GM12878 (cell line): ENCODE measurements at regions of chr1 and their contacts with region 1.

Region 1: DNA sequence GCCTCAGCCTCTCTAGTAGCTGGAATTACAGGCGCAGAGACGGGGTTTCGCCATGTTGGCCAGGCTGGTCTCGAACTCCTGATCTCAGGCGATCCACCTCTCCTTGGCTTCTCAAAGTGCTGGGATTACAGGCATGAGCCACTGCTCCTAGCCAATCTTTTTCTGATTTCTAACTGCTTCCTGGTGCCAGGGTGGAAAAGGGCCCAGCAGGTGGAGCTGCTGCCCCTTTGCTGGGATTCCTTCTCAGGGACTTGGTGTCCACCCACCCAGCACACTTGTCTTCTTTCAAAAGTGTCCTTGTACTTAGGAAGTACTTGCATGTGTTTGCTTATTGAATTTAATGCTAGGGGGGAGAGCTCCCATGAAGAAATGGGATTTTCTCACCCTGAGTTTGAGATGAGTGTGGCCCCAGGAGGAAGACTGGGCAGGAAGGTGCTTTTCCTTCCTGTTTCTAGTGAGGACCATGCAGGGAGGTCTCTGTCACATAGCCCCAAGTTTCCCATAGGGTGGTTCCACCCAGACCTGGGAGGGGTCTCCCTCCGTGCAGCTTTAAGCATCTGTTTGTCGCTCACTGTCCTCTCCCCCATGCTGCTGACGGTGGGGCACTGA is 14.2 kb downstream of the UTP11 start:
- DNase-seq: no peak
- ATAC-seq: peak; percentile 14
- H3K4me3 ChIP-seq: no peak overlapping the region
- H3K27ac ChIP-seq: peak overlapping the region; percentile 43
- H3K4me1 ChIP-seq: peaks cover 52% of the 10 kb centered on the region
- H3K27me3 ChIP-seq: no peaks in the 10 kb centered on the region
- CTCF ChIP-seq: peak; percentile 65 to 83 (median 72)
- EP300 ChIP-seq: no peak
- POLR2A ChIP-seq: no peak
- RAD21 ChIP-seq: peak; percentile 86

Region 2: DNA sequence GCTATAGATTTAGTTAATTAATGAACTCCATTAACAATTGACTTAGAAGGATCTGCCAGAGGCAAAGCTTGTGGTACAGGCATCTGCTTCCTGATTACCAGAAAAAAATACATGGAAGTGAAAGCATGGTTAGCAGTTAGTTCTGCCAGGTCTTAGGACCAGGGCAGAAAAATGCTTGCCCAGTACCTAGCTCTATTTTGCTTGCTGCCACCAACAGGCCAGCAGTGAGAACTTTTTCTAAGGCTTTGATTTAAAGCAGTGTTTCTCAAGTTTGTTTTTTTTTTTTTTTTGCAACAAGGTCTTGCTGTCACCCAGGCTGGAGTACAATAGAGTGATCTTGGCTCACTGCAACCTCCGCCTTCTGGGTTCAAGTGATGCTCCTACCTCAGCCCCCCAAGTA is 150.9 kb before region 1 on chr1:
- CTCF ChIA-PET with region 1: no interaction called
- POLR2A ChIA-PET with region 1: no interaction called
- RAD21 ChIA-PET with region 1: no interaction called
- SMC1A ChIA-PET with region 1: no interaction called
- in situ Hi-C with region 1: no loop called
- intact Hi-C with region 1: no loop called
- DNase-seq: no peak
- ATAC-seq: peak; percentile 24; the same call in 1 of the 3 replicates
- H3K4me3 ChIP-seq: no peak overlapping the region
- H3K27ac ChIP-seq: no peak overlapping the region
- H3K4me1 ChIP-seq: no peaks in the 10 kb centered on the region
- H3K27me3 ChIP-seq: no peaks in the 10 kb centered on the region
- CTCF ChIP-seq: no peak; a peak in 1 of 6 replicates
- EP300 ChIP-seq: no peak
- POLR2A ChIP-seq: no peak
- RAD21 ChIP-seq: no peak

Region 3: DNA sequence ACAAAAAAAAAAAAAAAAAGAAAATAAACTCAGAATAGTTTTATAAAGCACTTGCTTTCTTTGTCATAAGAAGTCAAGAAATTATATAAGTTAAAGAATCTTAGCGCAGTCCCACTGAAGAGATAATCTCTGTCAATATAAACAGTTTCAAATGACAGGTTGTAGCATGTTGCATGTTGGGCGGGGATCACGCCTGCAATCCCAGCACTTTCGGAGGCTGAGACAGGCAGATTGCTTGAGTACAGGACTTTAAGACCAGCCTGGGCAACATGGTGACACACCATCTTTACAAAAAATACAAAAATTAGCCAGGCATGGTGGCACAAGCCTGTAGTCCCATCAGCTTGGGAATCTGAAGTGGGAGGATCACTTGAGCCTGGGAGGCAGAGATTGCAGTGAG is 61.4 kb before region 1 on chr1:
- CTCF ChIA-PET with region 1: no interaction called
- POLR2A ChIA-PET with region 1: no interaction called
- RAD21 ChIA-PET with region 1: no interaction called
- SMC1A ChIA-PET with region 1: no interaction called
- in situ Hi-C with region 1: no loop called
- intact Hi-C with region 1: no loop called
- DNase-seq: no peak
- ATAC-seq: no peak
- H3K4me3 ChIP-seq: no peak overlapping the region
- H3K27ac ChIP-seq: no peak overlapping the region
- H3K4me1 ChIP-seq: no peaks in the 10 kb centered on the region
- H3K27me3 ChIP-seq: no peaks in the 10 kb centered on the region
- CTCF ChIP-seq: no peak
- EP300 ChIP-seq: no peak
- POLR2A ChIP-seq: no peak
- RAD21 ChIP-seq: no peak

Region 4: GRCh38 chr1:38012363-38013226 is 14.1 kb before region 1 on chr1 and contains the start of gene UTP11:
- CTCF ChIA-PET with region 1: interaction called, 23 read pairs
- POLR2A ChIA-PET with region 1: interaction called, 3 read pairs
- RAD21 ChIA-PET with region 1: interaction called, 5 read pairs
- SMC1A ChIA-PET with region 1: interaction called, 3 read pairs
- in situ Hi-C with region 1: no loop called
- intact Hi-C with region 1: no loop called
- DNase-seq: peak; percentile 86
- ATAC-seq: peak; percentile 96
- H3K4me3 ChIP-seq: peak within 1 kb of the TSS; percentile 84
- H3K27ac ChIP-seq: peak within 1 kb of the TSS; percentile 84
- H3K4me1 ChIP-seq: peaks cover 8% of the 10 kb centered on the region; the same call in 1 of the 2 replicates
- H3K27me3 ChIP-seq: no peaks in the 10 kb centered on the region
- CTCF ChIP-seq: no peak
- EP300 ChIP-seq: no peak
- POLR2A ChIP-seq: peak; percentile 87
- RAD21 ChIP-seq: no peak
- polyA plus RNA-seq, gene UTP11: 96.4 to 107 TPM

Region 5: DNA sequence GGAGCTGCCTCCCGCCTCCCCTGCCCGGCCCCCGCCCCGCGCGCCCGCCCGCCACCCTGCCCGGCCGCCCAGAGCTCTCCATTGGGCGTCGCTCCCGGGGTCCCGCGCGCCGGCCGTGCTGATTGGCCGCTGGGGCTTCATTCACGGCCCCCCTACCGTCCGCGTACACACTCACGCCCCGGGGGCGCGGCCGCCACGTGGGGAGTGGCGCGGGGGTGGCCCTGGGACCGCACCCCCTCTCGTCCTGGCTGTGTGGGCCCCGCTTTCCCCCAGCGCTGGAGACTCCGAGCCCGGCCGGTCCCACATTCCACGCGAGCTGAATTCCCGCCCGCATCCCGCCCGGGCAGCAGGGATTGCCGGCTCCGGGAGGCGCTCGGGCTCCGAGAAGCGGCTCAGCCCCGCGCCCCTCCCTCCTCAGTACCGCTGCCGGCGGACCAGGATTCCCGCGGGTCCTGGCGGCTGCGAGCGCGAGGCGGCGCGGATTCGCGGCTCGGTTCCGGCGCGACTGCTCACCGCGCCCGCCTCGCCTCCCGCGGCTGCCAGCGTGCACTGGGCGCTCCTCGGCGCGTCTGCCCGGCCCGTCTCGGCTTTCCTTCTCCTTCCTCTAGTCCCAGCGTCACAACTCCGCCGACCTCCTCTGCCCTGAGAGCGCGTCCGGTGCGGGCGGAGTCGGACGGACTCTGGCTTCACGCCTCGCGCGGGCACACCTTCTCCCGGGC is 20.3 kb after region 1 on chr1:
- CTCF ChIA-PET with region 1: interaction called, 52 read pairs
- POLR2A ChIA-PET with region 1: interaction called, 32 read pairs
- RAD21 ChIA-PET with region 1: interaction called, 61 read pairs
- SMC1A ChIA-PET with region 1: interaction called, 68 read pairs
- in situ Hi-C with region 1: no loop called
- intact Hi-C with region 1: no loop called
- DNase-seq: no peak
- ATAC-seq: peak; percentile 87
- H3K4me3 ChIP-seq: peak overlapping the region; percentile 57; the same call in 1 of the 2 replicates
- H3K27ac ChIP-seq: no peak overlapping the region
- H3K4me1 ChIP-seq: peaks cover 15% of the 10 kb centered on the region
- H3K27me3 ChIP-seq: peaks cover 9 to 13% of the 10 kb centered on the region in 2 experiments
- CTCF ChIP-seq: no peak
- EP300 ChIP-seq: no peak
- POLR2A ChIP-seq: no peak
- RAD21 ChIP-seq: no peak

Region 6: GRCh38 chr1:38064232-38064903 is 37.7 kb after region 1 on chr1:
- CTCF ChIA-PET with region 1: interaction called, 252 read pairs
- POLR2A ChIA-PET with region 1: interaction called, 8 read pairs
- RAD21 ChIA-PET with region 1: interaction called, 173 read pairs
- SMC1A ChIA-PET with region 1: interaction called, 33 read pairs
- in situ Hi-C with region 1: no loop called
- intact Hi-C with region 1: no loop called
- DNase-seq: no peak
- ATAC-seq: no peak
- H3K4me3 ChIP-seq: no peak overlapping the region
- H3K27ac ChIP-seq: no peak overlapping the region
- H3K4me1 ChIP-seq: peaks cover 15% of the 10 kb centered on the region
- H3K27me3 ChIP-seq: no peaks in the 10 kb centered on the region
- CTCF ChIP-seq: no peak
- EP300 ChIP-seq: no peak
- POLR2A ChIP-seq: no peak
- RAD21 ChIP-seq: no peak

Region 7: DNA sequence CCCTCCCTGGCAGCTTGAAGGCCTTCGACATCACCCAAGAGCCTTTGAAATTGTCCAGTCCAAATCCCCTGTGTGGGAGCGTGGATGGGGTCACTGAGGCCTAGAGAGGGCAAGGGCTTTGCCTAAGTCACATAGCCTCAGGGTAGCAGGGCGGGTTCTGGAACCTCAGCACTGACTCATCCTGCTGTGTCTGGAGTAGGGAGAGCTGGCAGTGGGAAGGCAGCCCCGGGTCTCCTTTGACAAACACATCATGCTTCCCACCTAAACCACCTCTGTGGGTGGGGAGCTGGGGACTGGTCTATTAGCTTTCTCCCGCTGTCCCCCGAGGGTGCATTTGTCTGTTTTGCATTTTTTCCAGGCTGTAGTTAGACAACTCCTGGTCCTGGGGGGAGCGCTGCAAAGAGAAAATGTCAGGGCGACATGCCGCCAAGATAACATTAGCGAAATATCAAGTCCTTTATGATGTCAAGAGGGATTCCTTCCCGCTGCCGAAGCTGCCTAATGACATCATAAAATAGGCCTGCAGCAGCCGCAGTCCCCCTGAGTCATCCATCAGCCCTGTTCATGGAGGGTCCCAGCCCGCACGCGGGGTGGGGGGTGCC is 96.8 kb after region 1 on chr1:
- CTCF ChIA-PET with region 1: no interaction called
- POLR2A ChIA-PET with region 1: no interaction called
- RAD21 ChIA-PET with region 1: no interaction called
- SMC1A ChIA-PET with region 1: no interaction called
- in situ Hi-C with region 1: no loop called
- intact Hi-C with region 1: no loop called
- DNase-seq: no peak
- ATAC-seq: no peak
- H3K4me3 ChIP-seq: no peak overlapping the region
- H3K27ac ChIP-seq: no peak overlapping the region
- H3K4me1 ChIP-seq: no peaks in the 10 kb centered on the region
- H3K27me3 ChIP-seq: no peaks in the 10 kb centered on the region; a peak in 2 of 4 replicates
- CTCF ChIP-seq: no peak
- EP300 ChIP-seq: no peak
- POLR2A ChIP-seq: no peak
- RAD21 ChIP-seq: no peak

Region 8: GRCh38 chr1:38173157-38173831 is 146.6 kb after region 1 on chr1:
- CTCF ChIA-PET with region 1: interaction called, 8 read pairs
- POLR2A ChIA-PET with region 1: interaction called, 9 read pairs
- RAD21 ChIA-PET with region 1: interaction called, 11 read pairs
- SMC1A ChIA-PET with region 1: interaction called, 16 read pairs
- in situ Hi-C with region 1: no loop called
- intact Hi-C with region 1: loop called (anchors 1 kb)
- DNase-seq: peak; percentile 86
- ATAC-seq: peak; percentile 90
- H3K4me3 ChIP-seq: 0 out of 2 replicates have a peak overlapping the region, but pooled peaks have one; percentile 1
- H3K27ac ChIP-seq: peak overlapping the region; percentile 93
- H3K4me1 ChIP-seq: peaks cover 30% of the 10 kb centered on the region
- H3K27me3 ChIP-seq: no peaks in the 10 kb centered on the region
- CTCF ChIP-seq: no peak
- EP300 ChIP-seq: peak in 1 of 2 experiments; percentile 62; a peak in 2 of 4 replicates
- POLR2A ChIP-seq: no peak
- RAD21 ChIP-seq: 0 out of 2 replicates have a peak, but pooled peaks have one; percentile 8

Region 9: GRCh38 chr1:38586993-38587646 is 560.4 kb after region 1 on chr1:
- CTCF ChIA-PET with region 1: interaction called, 3 read pairs
- POLR2A ChIA-PET with region 1: no interaction called
- RAD21 ChIA-PET with region 1: interaction called, 3 read pairs
- SMC1A ChIA-PET with region 1: interaction called, 5 read pairs
- in situ Hi-C with region 1: loop called (anchors 25 kb)
- intact Hi-C with region 1: loop called (anchors 5 kb)
- DNase-seq: peak; percentile 17
- ATAC-seq: peak; percentile 91
- H3K4me3 ChIP-seq: no peak overlapping the region
- H3K27ac ChIP-seq: no peak overlapping the region
- H3K4me1 ChIP-seq: peaks cover 3% of the 10 kb centered on the region; the same call in 1 of the 2 replicates
- H3K27me3 ChIP-seq: 0 out of 4 replicates have a peak, but pooled peaks cover 0 to 1% of the 10 kb centered on the region in 2 experiments
- CTCF ChIP-seq: peak; percentile 92 to 99 (median 97)
- EP300 ChIP-seq: no peak
- POLR2A ChIP-seq: no peak
- RAD21 ChIP-seq: peak; percentile 96

Region 10: DNA sequence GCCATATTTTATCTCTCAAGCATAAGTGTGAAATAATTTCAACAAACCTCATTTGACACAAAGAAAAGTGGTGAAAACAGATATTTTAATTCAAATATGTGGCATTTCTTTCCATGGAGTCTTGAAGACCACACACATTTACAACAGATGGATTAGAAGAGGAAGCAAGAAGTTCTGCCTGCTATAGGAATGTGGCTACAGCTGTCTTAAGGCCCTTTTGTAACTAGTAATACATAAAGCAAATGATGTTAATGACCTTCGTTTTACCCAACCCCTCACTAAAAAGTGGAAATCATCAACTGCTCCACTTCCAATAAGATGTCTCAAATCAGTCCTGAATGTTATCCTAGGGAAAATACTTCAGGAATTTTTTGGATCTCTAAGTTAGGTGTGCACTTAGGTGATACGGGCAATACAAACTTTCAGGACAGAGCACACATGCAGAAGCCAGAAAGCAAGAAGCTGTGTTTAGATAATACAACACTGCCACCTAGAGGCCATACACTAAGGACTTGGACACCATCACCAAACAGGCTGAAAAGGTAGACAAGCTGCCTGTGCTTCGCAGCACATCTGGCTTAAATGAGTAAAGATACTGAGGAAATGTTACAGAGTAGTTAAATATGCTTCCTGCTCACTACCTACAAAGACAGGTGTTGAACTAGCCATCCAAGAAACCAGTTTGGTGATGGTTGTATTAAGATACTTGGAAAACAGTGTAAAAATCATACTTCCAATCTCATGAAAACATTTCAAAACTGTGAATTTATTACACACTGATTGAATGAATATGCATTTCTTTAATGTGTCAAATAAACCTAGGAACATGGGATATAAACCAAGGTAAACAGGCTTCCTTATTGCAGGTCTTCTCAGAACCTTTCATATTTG is 808.5 kb after region 1 on chr1:
- CTCF ChIA-PET with region 1: interaction called, 11 read pairs
- POLR2A ChIA-PET with region 1: no interaction called
- RAD21 ChIA-PET with region 1: interaction called, 5 read pairs
- SMC1A ChIA-PET with region 1: interaction called, 11 read pairs
- in situ Hi-C with region 1: no loop called
- intact Hi-C with region 1: no loop called
- DNase-seq: peak; percentile 60
- ATAC-seq: peak; percentile 98
- H3K4me3 ChIP-seq: no peak overlapping the region
- H3K27ac ChIP-seq: no peak overlapping the region
- H3K4me1 ChIP-seq: no peaks in the 10 kb centered on the region
- H3K27me3 ChIP-seq: peaks cover 0 to 2% of the 10 kb centered on the region in 2 experiments; a peak in 2 of 4 replicates
- CTCF ChIP-seq: peak; percentile 68 to 86 (median 77)
- EP300 ChIP-seq: no peak
- POLR2A ChIP-seq: no peak
- RAD21 ChIP-seq: peak; percentile 84